Endothelial cell of umbilical vein (primary cell): ENCODE measurements at regions of chr3 and their contacts with region 1.

Region 1: DNA sequence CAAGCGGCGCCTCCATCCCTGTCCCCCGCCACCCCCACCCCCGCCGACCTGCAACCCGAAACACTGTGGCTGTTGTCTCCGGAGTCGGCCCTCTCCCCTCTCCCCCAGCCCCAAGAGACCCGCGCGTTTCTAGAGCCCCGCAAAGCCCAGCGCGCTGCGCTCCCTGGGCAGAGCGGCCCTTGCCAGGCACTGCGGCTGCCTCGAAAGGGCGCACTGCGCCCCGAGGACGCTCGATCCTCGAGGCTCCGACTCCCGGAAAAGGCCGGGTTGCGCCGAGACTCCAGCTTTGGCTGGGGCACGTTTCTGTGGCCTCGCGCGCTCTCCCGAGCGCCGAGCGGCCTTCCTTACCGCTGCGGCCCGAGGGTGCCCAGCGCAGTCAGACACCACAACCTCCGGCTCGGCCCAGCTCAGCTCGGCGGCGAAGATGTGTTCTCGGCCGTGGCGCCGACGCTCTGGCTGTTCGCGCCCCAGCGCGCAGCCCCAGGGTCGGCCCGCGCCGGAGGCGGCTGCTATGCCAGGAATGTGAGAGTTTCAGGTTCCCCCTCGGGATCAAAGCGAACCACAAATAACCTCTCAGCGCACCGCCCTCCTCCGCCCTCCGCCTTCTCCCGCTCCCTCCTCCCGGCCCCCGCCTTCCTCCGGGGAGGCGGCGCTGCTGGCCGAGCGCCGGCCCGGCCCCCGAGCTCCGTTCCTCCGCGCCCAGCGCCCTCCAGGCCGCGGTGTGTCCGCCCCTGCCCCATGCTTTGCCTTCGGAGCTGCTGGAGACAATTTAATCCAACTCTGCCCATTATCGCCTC is at the start of gene AMOTL2:
- DNase-seq: peak; percentile 93
- H3K4me3 ChIP-seq: peak within 1 kb of the TSS; percentile 65 to 93 (median 73)
- H3K27ac ChIP-seq: peak within 1 kb of the TSS; percentile 99
- H3K4me1 ChIP-seq: peaks cover 47% of the 10 kb centered on the region
- H3K27me3 ChIP-seq: no peaks in the 10 kb centered on the region
- CTCF ChIP-seq: no peak
- POLR2A ChIP-seq: peak; percentile 99
- total RNA-seq, gene AMOTL2: 145 and 167 TPM in 2 replicates

Region 2: DNA sequence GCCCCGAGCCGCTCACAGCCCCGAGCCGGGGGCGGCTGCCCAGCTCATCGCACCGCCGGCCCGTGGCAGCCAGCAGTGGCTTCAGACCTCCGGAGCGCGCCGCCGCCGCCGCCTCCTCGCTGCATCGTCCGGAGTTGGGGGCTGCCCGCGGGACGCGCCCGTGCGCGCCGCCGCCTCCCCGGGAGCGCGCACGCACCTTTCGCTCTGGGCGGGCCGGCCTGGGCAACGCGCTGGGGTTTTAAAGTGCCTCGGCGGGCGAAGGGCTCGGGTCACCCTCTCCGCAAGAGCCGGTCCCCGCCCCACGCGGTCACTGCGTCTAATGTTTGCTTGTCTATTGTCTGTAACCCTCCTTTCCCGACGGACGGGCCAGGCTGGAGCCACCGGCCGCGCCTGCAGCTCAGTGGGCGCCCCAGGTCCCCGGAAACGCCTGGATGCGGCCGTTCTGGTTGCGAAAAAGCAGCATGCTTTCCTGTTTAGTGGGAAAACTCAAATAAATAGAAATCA is 123.4 kb before region 1 on chr3 and contains the start of gene RYK:
- CTCF ChIA-PET with region 1: no interaction called
- POLR2A ChIA-PET with region 1: no interaction called
- dilution Hi-C with region 1: no loop called
- intact Hi-C with region 1: loop called (anchors 1 kb)
- DNase-seq: peak; percentile 77
- H3K4me3 ChIP-seq: peak within 1 kb of the TSS; percentile 52 to 91 (median 89)
- H3K27ac ChIP-seq: peak within 1 kb of the TSS; percentile 46
- H3K4me1 ChIP-seq: peaks cover 18% of the 10 kb centered on the region
- H3K27me3 ChIP-seq: peaks cover 0 to 3% of the 10 kb centered on the region in 2 experiments
- CTCF ChIP-seq: no peak
- POLR2A ChIP-seq: peak; percentile 65
- total RNA-seq, gene RYK: 44.1 and 48.3 TPM in 2 replicates

Region 3: GRCh38 chr3:134315286-134316106 is 58.7 kb before region 1 on chr3:
- CTCF ChIA-PET with region 1: interaction called, 60 read pairs
- POLR2A ChIA-PET with region 1: interaction called, 24 read pairs
- dilution Hi-C with region 1: no loop called
- intact Hi-C with region 1: loop called (anchors 1 kb)
- DNase-seq: peak; percentile 85
- H3K4me3 ChIP-seq: peak overlapping the region in 1 of 3 experiments; percentile 0
- H3K27ac ChIP-seq: peak overlapping the region; percentile 87
- H3K4me1 ChIP-seq: peaks cover 39% of the 10 kb centered on the region
- H3K27me3 ChIP-seq: no peaks in the 10 kb centered on the region
- CTCF ChIP-seq: no peak
- POLR2A ChIP-seq: peak; percentile 57

Region 4: DNA sequence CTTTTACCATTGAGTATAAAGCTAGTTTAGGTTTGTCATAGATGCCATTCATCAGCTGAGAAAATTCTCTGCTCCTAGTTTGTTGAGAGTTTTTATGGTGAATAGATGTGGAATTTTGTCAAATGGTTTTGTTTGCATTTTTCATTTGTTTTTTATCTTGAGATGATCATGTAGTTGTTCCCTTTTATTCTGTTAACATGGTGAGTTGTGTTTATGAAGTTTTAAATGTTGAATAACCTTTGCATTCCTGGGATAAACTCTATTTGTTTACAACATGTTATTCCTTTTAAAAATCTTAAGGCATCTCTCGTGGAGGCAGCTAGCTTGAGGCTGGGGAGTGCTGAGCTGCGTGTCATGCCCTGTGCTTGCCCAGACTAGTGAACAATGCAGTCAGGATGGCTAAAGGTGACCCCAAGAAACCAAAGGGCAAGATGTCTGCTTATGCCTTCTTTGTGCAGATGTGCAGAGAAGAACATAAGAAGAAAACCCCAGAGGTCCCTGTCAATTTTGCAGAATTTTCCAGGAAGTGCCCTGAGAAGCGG is 63.1 kb after region 1 on chr3:
- CTCF ChIA-PET with region 1: no interaction called
- POLR2A ChIA-PET with region 1: no interaction called
- dilution Hi-C with region 1: no loop called
- intact Hi-C with region 1: no loop called
- DNase-seq: no peak
- H3K4me3 ChIP-seq: no peak overlapping the region
- H3K27ac ChIP-seq: no peak overlapping the region
- H3K4me1 ChIP-seq: no peaks in the 10 kb centered on the region
- H3K27me3 ChIP-seq: peaks cover 11 to 14% of the 10 kb centered on the region in 2 experiments
- CTCF ChIP-seq: no peak
- POLR2A ChIP-seq: no peak

Region 5: GRCh38 chr3:134449277-134449676 is 75.1 kb after region 1 on chr3:
- CTCF ChIA-PET with region 1: interaction called, 4 read pairs
- POLR2A ChIA-PET with region 1: interaction called, 7 read pairs
- dilution Hi-C with region 1: no loop called
- intact Hi-C with region 1: loop called (anchors 2 kb)
- DNase-seq: peak; percentile 11
- H3K4me3 ChIP-seq: no peak overlapping the region
- H3K27ac ChIP-seq: no peak overlapping the region
- H3K4me1 ChIP-seq: peaks cover 23% of the 10 kb centered on the region
- H3K27me3 ChIP-seq: peaks cover 0 to 6% of the 10 kb centered on the region in 2 experiments
- CTCF ChIP-seq: peak; percentile 32 to 45
- POLR2A ChIP-seq: no peak

Region 6: DNA sequence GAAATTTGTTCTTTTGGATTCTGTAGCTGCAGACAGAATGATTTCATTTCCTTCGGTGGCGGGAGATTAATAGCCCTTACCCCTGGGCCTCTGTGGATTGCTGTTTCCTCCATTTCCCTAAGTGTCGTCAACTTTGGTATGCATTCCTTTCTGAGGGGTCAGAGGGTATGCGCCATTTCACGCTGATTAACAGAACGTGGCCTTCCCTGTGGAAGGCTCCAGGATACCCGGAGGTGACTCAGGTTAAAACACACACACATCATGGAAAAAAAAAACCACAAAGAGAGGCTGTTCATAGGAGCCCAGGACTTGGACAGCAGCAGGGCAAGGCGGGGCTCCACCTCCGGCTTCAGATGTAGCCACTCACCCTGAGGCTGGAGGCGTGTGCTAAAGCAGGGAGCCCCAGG is 472.7 kb after region 1 on chr3:
- CTCF ChIA-PET with region 1: no interaction called
- POLR2A ChIA-PET with region 1: no interaction called
- dilution Hi-C with region 1: no loop called
- intact Hi-C with region 1: loop called (anchors 5 kb)
- DNase-seq: peak; percentile 97
- H3K4me3 ChIP-seq: no peak overlapping the region
- H3K27ac ChIP-seq: peak overlapping the region; percentile 56
- H3K4me1 ChIP-seq: peaks cover 18% of the 10 kb centered on the region
- H3K27me3 ChIP-seq: no peaks in the 10 kb centered on the region
- CTCF ChIP-seq: no peak
- POLR2A ChIP-seq: no peak

Region 7: DNA sequence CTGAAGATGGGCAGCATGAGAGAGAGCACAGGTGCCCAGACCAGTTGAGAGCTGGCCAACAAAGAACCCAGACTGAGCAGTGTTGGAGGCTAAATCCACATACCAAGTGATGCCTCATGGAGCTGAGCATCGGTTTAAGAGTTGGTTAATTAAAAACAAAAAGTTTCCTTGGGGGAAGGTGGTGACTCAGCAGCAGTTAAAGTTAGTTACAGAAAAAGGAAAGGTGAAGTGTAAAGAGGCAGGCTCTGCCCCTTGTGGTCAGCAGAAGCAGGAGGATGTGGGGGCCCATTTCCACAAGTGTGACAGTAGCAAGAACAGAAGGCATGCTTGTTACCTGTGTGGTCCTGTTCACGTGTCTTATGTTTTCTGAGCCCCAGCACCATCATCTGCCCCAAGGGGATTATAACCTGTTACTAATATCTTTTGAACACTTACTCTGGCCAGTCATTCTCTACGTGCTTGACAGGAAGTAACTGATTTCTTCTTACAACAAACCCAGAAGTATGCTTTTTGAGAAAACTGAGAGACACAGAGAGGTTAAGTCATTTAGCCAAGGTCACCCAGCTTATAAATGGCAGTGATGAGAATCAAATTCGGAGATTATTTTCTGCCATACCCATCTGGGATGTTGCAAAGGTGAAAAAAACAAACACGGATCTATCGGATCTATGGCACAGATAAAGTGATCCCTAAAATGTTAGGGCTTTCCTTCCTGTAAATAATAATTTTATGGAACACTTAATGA is 511.9 kb after region 1 on chr3:
- CTCF ChIA-PET with region 1: no interaction called
- POLR2A ChIA-PET with region 1: no interaction called
- dilution Hi-C with region 1: no loop called
- intact Hi-C with region 1: no loop called
- DNase-seq: no peak
- H3K4me3 ChIP-seq: no peak overlapping the region
- H3K27ac ChIP-seq: no peak overlapping the region
- H3K4me1 ChIP-seq: no peaks in the 10 kb centered on the region
- H3K27me3 ChIP-seq: no peaks in the 10 kb centered on the region
- CTCF ChIP-seq: no peak
- POLR2A ChIP-seq: no peak